ENCODE measurements at regions of chr3 and their contacts with region 1.

Region 1: DNA sequence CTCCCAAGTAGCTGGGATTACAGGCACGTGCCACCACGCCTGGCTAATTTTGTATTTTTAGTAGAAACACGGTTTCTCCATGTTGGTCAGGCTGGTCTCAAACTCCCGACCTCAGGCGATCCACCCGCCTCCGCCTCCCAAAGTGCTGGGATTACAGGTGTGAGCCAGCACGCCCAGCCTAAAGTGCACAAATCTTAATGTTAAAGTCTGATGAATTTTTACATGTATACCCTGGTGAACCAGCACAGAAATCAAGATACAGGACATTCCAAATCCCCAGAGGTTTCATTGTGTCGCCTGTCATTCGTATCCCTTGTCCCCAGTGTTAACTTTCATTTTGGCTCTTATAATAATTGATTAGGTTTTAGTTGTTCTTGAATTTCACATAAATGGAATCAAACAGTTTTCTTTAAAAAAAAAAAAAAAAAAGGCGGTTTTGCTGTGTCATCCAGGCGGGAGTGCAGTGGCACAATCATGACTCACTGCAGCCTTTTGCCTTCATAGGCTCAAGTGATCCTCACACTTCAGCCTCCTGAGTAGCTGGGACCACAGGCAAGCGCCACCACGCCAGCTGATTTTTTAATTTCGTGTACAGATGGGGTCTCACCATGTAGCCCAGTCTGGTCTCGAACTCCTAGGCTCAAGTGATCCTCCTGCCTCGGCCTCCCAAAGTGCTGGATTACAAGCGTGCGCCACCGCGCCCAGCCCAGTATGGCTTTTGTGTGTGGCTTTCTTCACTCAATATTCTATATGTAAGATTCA is 1.5 kb upstream of the TM4SF19 start:
- DNase-seq: peak; percentile 86
- H3K4me3 Mint-ChIP-seq: no peak overlapping the region
- H3K27ac Mint-ChIP-seq: peak overlapping the region; percentile 57
- H3K4me1 Mint-ChIP-seq: peaks cover 24% of the 10 kb centered on the region
- H3K27me3 Mint-ChIP-seq: no peaks in the 10 kb centered on the region
- CTCF ChIP-seq: no peak

Region 2: DNA sequence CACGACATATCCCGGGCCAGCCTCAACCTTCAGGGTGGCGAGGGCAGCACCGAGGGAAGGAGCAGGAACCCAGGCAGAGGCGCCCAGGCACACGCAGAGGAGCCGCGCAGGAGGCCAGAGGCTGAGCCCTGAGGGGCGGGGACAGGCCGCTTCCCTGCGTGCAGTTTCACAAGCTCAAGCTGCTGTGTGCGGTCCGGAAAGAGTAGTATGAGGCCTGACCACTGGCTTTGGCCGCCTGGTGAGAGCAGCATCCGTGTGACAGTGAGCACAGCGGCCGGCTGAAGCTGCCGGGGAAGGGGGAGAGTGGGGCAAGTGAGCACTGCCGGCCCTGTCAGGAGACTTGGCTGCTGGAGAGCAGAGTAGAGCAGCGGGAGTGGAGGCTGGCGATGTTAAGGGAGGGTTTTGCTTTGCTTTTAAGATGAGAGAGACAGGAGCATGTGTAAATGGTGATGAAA is 137.1 kb before region 1 on chr3:
- CTCF ChIA-PET with region 1: no interaction called
- POLR2A ChIA-PET with region 1: no interaction called
- intact Hi-C with region 1: no loop called
- DNase-seq: no peak
- H3K4me3 Mint-ChIP-seq: no peak overlapping the region
- H3K27ac Mint-ChIP-seq: no peak overlapping the region
- H3K4me1 Mint-ChIP-seq: no peaks in the 10 kb centered on the region
- H3K27me3 Mint-ChIP-seq: peaks cover 17% of the 10 kb centered on the region
- CTCF ChIP-seq: no peak

Region 3: DNA sequence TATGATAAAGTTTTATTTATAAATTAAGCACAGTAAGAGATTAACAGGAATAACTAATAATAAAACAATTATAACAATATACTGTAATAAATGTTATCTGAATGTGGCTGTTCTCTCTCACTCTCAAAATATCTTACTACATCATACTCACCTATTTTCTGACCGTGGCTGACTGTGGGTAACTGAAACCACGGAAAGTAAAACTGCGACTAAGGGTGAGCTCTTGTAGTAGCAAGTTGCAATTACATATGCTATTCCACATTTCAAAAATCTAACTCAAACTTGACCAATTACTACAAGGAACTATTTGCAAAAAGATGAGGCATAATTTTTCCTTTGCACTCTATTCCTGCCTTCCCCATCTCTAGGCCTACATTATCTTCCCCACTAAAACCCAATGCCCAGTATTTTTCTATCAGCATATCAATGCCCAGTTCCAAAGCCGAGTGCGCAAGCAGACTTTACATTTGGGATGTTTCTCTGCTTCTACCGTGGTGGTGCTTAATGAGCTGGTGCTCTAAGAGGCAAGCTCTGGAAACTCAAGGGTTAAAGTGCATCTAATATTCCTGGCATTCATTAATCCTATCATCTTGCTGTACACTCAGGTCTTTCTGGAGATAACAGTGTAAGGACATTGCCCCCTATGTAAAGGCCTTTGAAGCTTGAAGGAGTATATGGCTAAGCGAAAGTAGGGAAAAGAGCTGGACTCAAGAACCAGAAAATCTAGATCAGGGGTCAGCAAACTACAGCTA is 58.8 kb before region 1 on chr3:
- CTCF ChIA-PET with region 1: no interaction called
- POLR2A ChIA-PET with region 1: interaction called, 11 read pairs
- intact Hi-C with region 1: no loop called
- DNase-seq: no peak
- H3K4me3 Mint-ChIP-seq: no peak overlapping the region
- H3K27ac Mint-ChIP-seq: no peak overlapping the region
- H3K4me1 Mint-ChIP-seq: peaks cover 27% of the 10 kb centered on the region
- H3K27me3 Mint-ChIP-seq: no peaks in the 10 kb centered on the region
- CTCF ChIP-seq: no peak

Region 4: DNA sequence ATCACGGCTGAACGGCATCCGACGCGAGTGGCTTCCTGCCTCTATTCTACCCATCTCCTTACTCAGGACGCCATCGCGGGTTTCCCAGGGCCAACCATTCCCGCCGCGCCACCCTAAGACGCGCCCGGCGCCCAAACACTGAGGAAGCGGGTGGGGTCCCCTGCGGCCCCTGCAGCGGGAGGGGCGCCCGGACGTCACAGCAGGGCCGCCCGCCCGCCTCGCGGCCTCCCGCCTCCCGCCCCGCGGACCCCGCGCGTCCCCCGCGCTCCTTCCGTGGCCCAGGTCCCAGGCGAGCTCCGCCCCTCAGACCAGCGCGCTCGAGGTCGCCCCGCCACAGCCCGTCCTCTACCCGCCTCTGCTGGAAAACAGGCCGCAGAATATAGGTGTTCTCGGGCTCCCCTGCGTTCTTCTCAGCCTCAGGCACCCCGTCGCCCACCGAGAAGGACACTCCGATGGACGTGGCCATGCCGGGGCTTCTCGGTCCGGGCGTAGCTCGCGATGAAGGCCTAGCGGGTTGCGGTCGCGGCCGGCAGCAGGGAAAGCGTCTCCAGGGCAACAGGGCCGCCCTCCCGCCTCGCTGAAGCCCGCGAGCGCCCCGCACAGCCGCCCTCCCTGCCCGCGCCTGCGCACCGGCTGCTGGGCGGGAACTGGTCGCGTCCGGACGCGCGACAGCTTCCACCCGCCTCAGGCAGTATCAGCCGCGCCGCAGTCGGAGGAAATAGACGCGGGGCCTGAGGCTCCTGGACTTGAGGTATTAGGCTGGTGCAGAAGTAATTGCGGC is 21.8 kb before region 1 on chr3 and contains the start of gene DYNLT2B:
- CTCF ChIA-PET with region 1: interaction called, 4 read pairs
- POLR2A ChIA-PET with region 1: interaction called, 72 read pairs
- intact Hi-C with region 1: no loop called
- DNase-seq: peak; percentile 87
- H3K4me3 Mint-ChIP-seq: peak within 1 kb of the TSS; percentile 94
- H3K27ac Mint-ChIP-seq: peak within 1 kb of the TSS; percentile 95
- H3K4me1 Mint-ChIP-seq: no peaks in the 10 kb centered on the region
- H3K27me3 Mint-ChIP-seq: no peaks in the 10 kb centered on the region
- CTCF ChIP-seq: no peak
- total RNA-seq, gene DYNLT2B: 22.3 and 23.5 TPM in 2 replicates

Region 5: GRCh38 chr3:196721097-196721496 is 381.4 kb after region 1 on chr3:
- CTCF ChIA-PET with region 1: no interaction called
- POLR2A ChIA-PET with region 1: no interaction called
- intact Hi-C with region 1: no loop called
- DNase-seq: no peak
- H3K4me3 Mint-ChIP-seq: no peak overlapping the region
- H3K27ac Mint-ChIP-seq: no peak overlapping the region
- H3K4me1 Mint-ChIP-seq: peaks cover under 1% of the 10 kb centered on the region
- H3K27me3 Mint-ChIP-seq: no peaks in the 10 kb centered on the region
- CTCF ChIP-seq: no peak

Measured in MCF 10A (cell line).